AG04450 (cell line): ENCODE measurements at regions of chr9 and their contacts with region 1.

Region 1: DNA sequence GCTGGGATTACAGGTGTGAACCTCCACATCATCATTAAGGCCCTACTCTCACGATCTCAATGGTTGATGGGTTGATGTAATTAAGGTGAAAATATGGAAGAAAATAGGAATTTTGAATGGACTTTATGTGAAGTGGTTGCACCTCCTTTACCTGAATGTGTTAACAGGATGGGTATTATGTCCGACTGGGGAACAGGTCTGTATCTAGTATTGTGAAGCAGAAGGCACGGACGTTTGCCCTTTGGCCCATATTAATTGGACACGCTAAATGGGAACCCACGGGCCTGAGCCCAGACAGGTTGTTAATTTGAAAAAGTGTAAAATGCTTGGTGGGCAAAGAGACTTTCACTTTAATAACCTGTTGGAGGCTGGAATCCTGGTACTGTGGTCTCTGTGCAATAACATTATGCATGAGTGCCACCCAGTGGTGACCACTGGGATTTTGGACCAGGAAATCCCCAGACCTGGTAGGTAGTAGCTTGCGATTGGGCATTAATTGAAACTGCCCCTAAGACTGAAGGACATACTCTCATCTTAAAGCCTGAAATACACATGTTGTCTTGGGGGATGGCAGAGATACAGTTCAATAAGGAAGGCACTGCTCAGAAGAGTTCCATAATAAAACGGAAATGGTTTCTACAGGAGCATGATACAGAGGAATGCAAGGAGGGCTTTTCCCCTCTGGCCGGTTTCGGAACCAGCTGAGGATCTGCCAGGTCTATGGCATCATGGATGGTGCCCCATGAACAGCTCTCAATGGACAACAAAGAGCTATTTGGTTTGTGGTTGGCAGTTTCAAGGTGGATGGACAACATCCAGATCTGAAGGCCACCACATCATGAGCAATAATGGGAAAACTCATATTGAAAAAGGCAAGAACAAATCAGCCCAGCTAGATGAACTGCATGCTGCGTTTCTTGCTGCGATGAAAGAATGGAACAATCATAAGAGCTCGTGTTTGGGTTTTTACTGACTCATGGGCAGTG is 26.2 kb upstream of the BICD2 start:
- DNase-seq: peak; percentile 48
- H3K4me3 ChIP-seq: no peak overlapping the region
- H3K27ac ChIP-seq: no peak overlapping the region
- H3K27me3 ChIP-seq: peaks cover 24% of the 10 kb centered on the region
- CTCF ChIP-seq: peak; percentile 82

Region 2: DNA sequence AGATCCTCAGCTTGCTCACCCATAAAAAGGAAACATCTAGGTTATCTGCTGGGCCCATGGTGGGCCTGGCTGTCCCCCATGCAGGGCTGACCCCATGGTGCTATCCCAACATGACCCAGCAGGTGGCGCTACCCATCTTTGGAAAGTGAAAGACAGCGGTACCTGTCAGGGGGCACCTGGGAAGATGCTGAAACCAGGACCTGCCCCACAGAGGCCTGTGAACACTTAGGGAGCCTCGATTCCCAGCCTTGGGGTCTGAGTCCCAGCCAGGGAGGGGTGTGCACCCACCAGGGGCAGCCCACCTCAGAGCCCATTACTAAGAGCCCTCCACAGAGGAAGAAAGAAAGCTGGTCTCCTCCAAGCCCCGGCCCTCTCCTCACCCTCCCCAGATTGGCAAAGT is 74.3 kb before region 1 on chr9:
- CTCF ChIA-PET with region 1: interaction called, 159 read pairs
- POLR2A ChIA-PET with region 1: no interaction called
- DNase-seq: no peak
- H3K4me3 ChIP-seq: no peak overlapping the region
- H3K27ac ChIP-seq: no peak overlapping the region
- H3K27me3 ChIP-seq: no peaks in the 10 kb centered on the region
- CTCF ChIP-seq: peak; percentile 88

Region 3: DNA sequence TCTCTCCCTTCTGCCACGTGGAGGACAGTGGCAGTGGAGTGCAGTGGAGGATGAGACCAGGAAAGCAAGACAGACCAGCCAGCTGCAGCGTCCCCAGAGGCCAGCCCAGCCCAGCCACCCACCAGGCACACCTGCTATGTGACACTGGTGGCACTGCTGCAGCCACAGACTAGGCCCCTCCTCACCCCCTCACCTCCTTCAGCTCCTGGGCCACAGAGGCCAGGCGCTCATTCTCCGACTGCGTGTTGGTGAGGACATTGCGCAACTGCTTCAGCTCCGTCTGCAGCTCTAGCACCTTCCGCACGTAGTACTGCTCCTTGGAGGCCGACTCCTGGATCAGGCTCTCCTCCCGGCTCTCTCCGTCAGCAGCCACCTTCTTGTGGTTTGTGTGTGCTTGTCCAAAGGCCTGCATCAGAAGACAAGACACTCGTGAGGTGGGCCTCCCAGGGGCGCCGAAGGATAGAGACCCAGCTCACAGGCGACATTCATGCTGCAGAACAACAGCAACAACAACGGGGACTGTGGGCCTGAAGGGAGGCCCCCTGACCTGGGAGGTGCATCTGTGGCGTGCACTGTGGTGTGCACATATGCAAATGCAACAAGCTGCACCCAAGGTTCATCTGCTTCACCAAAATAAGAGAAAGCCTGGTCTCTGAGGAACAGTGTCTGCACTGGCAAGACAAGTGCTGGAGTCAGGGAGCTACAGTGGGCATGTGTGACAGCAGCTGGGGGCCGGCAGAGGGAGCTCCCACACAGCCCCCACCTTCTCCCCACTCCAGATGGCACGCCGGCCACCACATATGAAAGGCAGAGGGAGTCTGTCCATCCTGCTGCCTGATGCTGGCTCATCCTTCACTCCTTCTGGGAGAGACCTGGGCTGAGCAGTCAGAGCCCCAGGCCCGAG is 61.8 kb before region 1 on chr9:
- CTCF ChIA-PET with region 1: interaction called, 33 read pairs
- POLR2A ChIA-PET with region 1: no interaction called
- DNase-seq: no peak
- H3K4me3 ChIP-seq: no peak overlapping the region
- H3K27ac ChIP-seq: no peak overlapping the region
- H3K27me3 ChIP-seq: no peaks in the 10 kb centered on the region
- CTCF ChIP-seq: peak; percentile 59

Region 4: GRCh38 chr9:92764988-92765936 is 25.6 kb before region 1 on chr9:
- CTCF ChIA-PET with region 1: interaction called, 12 read pairs
- POLR2A ChIA-PET with region 1: no interaction called
- DNase-seq: peak; percentile 85
- H3K4me3 ChIP-seq: peak overlapping the region; percentile 67
- H3K27ac ChIP-seq: peak overlapping the region; percentile 96
- H3K27me3 ChIP-seq: peaks cover 2% of the 10 kb centered on the region
- CTCF ChIP-seq: peak; percentile 94